Left ventricle myocardium superior (tissue), 1 donor: ENCODE measurements at regions of chr1 and their contacts with region 1.

Region 1: DNA sequence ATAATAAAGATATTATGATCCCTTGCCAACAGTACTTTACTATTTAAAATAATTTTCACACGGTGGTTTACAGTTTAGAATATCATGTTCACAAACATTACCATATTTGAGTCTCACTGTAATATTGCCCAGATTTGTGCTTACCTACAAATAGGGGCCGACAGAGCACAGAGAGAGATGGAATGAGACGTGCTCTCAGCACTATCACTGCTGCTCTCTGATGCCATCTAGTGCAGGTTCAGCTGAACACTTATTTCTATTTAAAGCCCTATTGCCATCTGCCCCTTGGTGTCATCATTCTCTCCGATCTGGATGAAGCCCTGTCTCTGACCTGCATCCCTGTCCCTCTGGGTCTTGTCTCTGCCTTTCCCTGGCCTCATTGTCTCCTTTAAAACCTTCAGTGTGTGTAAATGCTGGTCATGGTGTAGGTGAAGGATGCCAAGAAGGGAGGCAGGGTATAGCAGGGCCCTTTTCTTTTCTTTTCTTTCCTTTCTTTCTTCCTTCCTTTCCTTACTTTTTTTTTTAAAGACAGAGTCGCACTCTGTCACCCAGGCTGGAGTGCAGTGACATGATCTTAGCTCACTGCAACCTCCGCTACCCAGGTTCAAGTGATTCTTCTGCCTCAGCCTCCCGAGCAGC is 6.9 kb upstream of the GPATCH4 start:
- DNase-seq: no peak
- ATAC-seq: peak; percentile 96

Region 2: DNA sequence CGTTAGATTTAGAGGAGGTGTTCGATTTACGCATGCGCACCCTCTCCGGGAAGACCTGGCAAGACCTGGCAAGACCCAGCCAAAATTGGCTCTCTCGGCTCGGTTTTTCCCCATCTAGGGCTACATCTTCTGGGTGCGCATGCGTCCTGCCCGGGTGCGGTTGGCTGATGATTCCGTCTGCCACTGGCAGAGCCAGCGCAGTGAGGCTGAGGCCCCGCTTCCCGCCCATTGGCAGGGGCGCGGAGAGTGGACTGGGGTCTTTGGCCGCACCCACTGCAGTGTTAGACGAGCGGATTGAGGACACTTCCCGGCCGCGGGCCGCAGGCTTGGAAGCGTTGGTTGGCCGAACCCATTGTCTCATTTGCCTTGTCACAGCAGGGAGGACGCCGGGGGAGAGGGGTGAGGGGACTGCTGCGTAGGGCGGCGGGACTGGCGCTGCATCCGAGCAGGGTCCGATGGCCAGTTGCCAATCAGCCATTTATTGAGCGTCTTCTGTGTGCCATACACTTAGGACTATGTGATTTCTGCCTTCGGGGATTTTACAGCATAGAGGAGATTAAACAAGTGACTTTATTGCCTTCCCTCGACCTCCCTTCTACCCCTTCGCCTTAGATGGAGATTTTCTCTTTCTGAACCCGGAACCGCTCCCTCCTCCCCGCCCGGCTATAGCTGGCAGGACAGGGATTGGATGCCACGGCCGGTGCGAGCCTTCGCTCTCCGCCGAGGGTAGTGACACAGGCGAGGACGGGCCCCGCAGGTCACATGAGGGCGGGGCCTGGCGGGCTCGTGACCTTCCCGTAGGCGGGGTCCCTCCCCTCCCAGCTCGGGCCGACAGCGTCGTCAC is 151.3 kb before region 1 on chr1:
- intact Hi-C with region 1: loop called (anchors 5 kb)
- DNase-seq: peak; percentile 98
- ATAC-seq: peak; percentile 94

Region 3: GRCh38 chr1:156510709-156511108 is 97.4 kb before region 1 on chr1:
- intact Hi-C with region 1: no loop called
- DNase-seq: peak; percentile 87
- ATAC-seq: peak; percentile 73

Region 4: DNA sequence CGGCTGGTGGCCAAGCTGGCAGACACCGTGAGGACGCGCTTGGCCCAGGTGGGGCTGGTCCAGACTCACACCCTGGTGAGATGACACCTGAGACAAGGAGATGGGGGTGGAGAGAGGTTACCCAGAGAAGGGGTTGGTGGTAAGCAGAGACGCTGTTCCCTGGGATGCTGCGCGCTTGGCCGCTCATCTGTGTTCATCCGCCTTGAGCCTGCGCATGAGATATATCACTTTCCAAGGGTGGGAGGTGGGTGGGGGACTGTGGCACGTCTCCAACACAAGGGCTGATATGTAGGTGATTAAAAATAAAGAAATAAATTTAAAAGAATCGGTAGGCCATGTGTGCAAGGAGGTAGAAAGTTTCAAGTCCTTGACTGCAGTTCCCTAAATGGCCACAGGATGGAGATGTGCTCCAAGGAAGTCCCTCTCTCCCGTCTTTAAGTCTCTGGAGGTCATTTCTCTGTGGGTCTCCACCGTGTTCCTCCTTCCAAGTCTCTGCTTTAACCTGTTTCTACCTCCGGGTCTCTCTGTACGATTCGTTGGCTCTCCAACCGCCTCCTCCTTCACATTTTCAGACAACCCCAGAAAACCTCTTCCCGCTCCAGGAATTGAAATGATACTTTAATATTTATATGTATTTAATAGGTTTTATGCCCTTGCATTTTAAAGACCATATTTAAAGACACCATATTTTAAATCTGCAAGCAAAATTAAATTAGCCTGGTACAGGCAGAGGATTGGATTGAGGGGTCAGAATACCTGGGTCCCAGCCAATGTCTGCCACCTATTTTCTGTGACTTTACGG is 24.1 kb before region 1 on chr1:
- intact Hi-C with region 1: loop called (anchors 2 kb)
- DNase-seq: peak; percentile 37
- ATAC-seq: peak; percentile 58